Tibial artery (tissue), 4 donors: ENCODE measurements at regions of chr2 and their contacts with region 1.

Region 1: DNA sequence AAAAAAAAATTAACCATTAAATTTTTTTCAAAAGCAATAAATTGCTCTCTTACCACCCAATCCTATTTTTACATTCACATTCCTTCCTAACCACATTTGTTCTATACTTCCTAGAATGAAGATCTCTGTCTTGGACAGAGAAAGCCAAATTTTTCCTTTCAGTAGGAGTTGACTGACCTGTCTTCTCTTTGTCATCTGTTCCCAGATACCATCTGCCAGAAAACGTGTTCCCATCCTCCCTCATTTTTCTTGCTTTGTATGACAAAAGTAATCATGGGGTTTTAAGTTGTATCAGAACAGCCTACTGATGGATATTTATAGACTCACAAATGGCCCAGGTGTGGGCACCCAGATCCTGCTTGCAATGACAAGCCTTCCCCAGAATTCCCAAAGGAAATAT is 182.1 kb downstream of the CYP26B1 start:
- DNase-seq: no peak
- H3K4me3 ChIP-seq: no peak overlapping the region
- H3K27ac ChIP-seq: no peak overlapping the region
- H3K4me1 ChIP-seq: no peaks in the 10 kb centered on the region
- H3K27me3 ChIP-seq: peaks cover 0 to 4% of the 10 kb centered on the region in 2 donors
- CTCF ChIP-seq: no peak

Region 2: DNA sequence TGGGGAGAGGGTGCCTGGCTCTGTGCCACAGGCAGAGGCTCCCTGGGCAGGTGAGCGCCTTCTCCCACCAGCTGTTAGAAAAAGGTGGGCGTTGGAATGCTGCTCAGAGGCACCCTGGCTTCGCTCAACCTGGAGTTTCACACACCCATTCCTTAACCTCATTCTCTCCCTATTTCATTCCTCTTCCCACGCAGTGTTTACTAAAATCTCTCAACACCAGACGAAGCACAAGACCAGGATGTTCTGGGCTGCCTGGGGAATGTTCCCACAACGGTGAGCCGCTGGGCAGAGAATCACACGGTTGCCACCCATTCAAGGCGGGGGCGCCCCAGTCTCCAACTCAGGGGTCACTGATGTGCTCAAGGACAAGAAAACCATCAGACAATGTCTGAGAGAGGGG is 1476.4 kb before region 1 on chr2:
- intact Hi-C with region 1: loop called (anchors 5 kb)
- DNase-seq: no peak
- H3K4me3 ChIP-seq: no peak overlapping the region
- H3K27ac ChIP-seq: no peak overlapping the region
- H3K4me1 ChIP-seq: no peaks in the 10 kb centered on the region
- H3K27me3 ChIP-seq: peaks cover 0 to 7% of the 10 kb centered on the region in 2 donors
- CTCF ChIP-seq: no peak

Region 3: DNA sequence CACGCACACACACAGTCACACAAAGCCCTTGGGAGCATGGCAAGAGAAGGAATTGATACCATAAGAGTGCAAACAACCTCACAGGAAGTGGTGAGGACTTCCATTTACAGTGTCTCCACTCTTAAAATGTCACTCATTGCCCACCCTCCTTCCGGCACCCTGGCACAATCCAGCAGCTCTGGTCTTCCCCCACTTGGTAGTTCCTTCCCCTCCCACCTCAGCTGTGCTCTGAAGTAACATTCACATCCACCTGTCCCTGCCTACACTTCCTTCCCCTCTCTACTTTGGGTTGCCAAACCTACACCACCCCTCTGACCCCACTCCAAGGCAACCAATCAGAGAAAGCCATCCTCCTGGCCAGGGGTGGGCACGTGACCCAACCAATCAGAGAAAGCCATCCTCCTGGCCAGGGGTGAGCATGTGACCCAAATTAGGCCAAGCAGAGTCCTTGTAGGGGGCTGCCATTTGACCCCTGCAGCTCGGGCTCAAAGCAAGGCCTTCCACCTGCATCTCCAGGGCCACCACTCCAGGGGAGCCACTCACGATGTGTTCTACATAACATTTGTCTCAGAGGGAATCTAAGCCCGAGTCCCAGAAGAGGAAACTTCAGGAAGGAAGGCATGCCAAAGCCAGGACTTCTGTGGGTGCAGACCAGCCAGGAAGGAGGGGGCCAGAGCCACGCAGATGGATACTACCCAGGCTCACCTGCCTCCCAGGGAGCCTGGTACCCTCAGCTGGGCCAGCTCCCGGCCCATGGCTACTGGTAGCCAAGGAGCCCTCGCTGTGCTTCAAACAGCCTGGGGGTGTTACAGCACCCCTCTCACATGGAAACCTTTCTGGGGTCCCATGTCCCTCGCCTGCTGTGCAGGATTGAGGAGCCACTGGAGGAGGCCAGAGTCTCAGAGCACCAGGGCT is 160.9 kb after region 1 on chr2:
- intact Hi-C with region 1: no loop called
- DNase-seq: peak in 1 of 2 donors; percentile 49
- H3K4me3 ChIP-seq: no peak overlapping the region
- H3K27ac ChIP-seq: no peak overlapping the region
- H3K4me1 ChIP-seq: peaks cover 0 to 4% (median 0%) of the 10 kb centered on the region in 4 donors
- H3K27me3 ChIP-seq: peaks cover 0 to 7% of the 10 kb centered on the region in 2 donors
- CTCF ChIP-seq: no peak